Caco-2 (cell line): ENCODE measurements at regions of chr15 and their contacts with region 1.

Region 1: DNA sequence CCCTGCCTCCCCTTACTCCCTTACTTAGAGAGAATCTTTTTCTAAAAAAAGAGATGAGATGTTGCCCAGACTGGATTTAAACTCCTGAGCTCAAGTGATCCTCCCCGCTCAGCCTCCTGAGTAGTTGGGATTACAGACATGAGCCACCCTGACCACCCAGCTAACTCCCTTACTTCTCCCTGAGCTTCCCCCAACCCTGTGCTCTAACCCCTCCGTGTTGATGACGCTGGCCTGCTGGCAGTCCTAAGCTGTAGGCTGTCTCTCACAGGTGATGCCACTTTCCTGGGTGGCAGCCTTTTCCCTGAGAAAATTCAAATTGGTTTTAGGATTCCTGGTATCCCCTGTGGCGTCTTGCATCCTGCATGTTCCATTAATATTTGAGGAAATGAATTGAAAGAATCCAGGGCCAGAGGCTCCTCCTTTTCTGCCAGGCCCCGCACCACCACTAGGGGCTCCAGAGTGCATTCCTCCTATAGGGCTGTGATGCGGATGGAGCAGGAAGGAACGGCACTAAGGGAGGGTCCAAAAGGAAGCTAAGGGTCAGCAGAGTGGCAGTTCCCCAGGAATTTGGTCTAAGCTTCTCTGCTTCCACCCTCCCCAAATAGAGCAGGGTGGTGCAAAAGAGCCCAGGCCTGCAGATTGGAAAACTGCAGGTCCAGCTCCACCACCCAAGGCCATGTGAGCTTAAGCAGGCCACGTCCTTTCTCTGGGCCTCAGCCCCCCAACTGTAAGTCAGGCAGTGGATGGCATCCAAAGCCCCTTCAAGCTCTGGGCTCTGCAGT is 101.1 kb downstream of the DAPK2 start:
- DNase-seq: peak; percentile 56 to 75
- H3K4me3 ChIP-seq: no peak overlapping the region
- H3K4me3 Mint-ChIP-seq: no peak overlapping the region
- H3K27ac Mint-ChIP-seq: no peak overlapping the region
- H3K4me1 ChIP-seq: 0 out of 2 replicates have a peak, but pooled peaks cover 3% of the 10 kb centered on the region
- H3K4me1 Mint-ChIP-seq: peaks cover 5% of the 10 kb centered on the region
- H3K27me3 ChIP-seq: no peaks in the 10 kb centered on the region
- H3K27me3 Mint-ChIP-seq: no peaks in the 10 kb centered on the region
- CTCF ChIP-seq: peak; percentile 72 to 93

Region 2: GRCh38 chr15:64037966-64038576 is 92.9 kb after region 1 on chr15:
- CTCF ChIA-PET with region 1: no interaction called
- POLR2A ChIA-PET with region 1: interaction called, 15 read pairs
- intact Hi-C with region 1: no loop called
- DNase-seq: no peak
- H3K4me3 ChIP-seq: no peak overlapping the region
- H3K4me3 Mint-ChIP-seq: no peak overlapping the region
- H3K27ac Mint-ChIP-seq: no peak overlapping the region
- H3K4me1 ChIP-seq: no peaks in the 10 kb centered on the region
- H3K4me1 Mint-ChIP-seq: no peaks in the 10 kb centered on the region
- H3K27me3 ChIP-seq: no peaks in the 10 kb centered on the region
- H3K27me3 Mint-ChIP-seq: no peaks in the 10 kb centered on the region
- CTCF ChIP-seq: no peak

Region 3: GRCh38 chr15:64046347-64047153 is 101.4 kb after region 1 on chr15 and contains the start of gene DAPK2:
- CTCF ChIA-PET with region 1: interaction called, 19 read pairs
- POLR2A ChIA-PET with region 1: no interaction called
- intact Hi-C with region 1: loop called (anchors 1 kb)
- DNase-seq: peak; percentile 51 to 84
- H3K4me3 ChIP-seq: peak within 1 kb of the TSS; percentile 35
- H3K4me3 Mint-ChIP-seq: peak within 1 kb of the TSS; percentile 67
- H3K27ac Mint-ChIP-seq: no peak within 1 kb of the TSS
- H3K4me1 ChIP-seq: peaks cover 16% of the 10 kb centered on the region
- H3K4me1 Mint-ChIP-seq: peaks cover 11% of the 10 kb centered on the region
- H3K27me3 ChIP-seq: no peaks in the 10 kb centered on the region
- H3K27me3 Mint-ChIP-seq: no peaks in the 10 kb centered on the region
- CTCF ChIP-seq: peak; percentile 73 to 75
- total RNA-seq, gene DAPK2: 1.4 and 2.2 TPM in 2 replicates

Region 4: GRCh38 chr15:64067564-64068030 is 122.4 kb after region 1 on chr15:
- CTCF ChIA-PET with region 1: no interaction called
- POLR2A ChIA-PET with region 1: no interaction called
- intact Hi-C with region 1: loop called (anchors 2 kb)
- DNase-seq: peak; percentile 58 to 77
- H3K4me3 ChIP-seq: no peak overlapping the region
- H3K4me3 Mint-ChIP-seq: no peak overlapping the region
- H3K27ac Mint-ChIP-seq: no peak overlapping the region
- H3K4me1 ChIP-seq: peaks cover 19% of the 10 kb centered on the region
- H3K4me1 Mint-ChIP-seq: peaks cover 5% of the 10 kb centered on the region
- H3K27me3 ChIP-seq: no peaks in the 10 kb centered on the region
- H3K27me3 Mint-ChIP-seq: no peaks in the 10 kb centered on the region
- CTCF ChIP-seq: peak; percentile 66 to 77

Region 5: GRCh38 chr15:64216730-64217428 is 271.7 kb after region 1 on chr15:
- CTCF ChIA-PET with region 1: no interaction called
- POLR2A ChIA-PET with region 1: no interaction called
- intact Hi-C with region 1: no loop called
- DNase-seq: peak; percentile 32 to 49
- H3K4me3 ChIP-seq: no peak overlapping the region
- H3K4me3 Mint-ChIP-seq: no peak overlapping the region
- H3K27ac Mint-ChIP-seq: no peak overlapping the region
- H3K4me1 ChIP-seq: peaks cover 14% of the 10 kb centered on the region
- H3K4me1 Mint-ChIP-seq: peaks cover 5% of the 10 kb centered on the region
- H3K27me3 ChIP-seq: no peaks in the 10 kb centered on the region
- H3K27me3 Mint-ChIP-seq: no peaks in the 10 kb centered on the region
- CTCF ChIP-seq: no peak